ENCODE measurements at regions of chr1 and their contacts with region 1.

Region 1: GRCh38 chr1:17653728-17654351 is 101.3 kb upstream of the ACTL8 start:
- DNase-seq: peak in 1 of 2 donors; percentile 83
- ATAC-seq: no peak
- H3K4me3 ChIP-seq: no peak overlapping the region
- H3K27ac ChIP-seq: peak overlapping the region; percentile 6 to 49
- H3K4me1 ChIP-seq: no peaks in the 10 kb centered on the region
- H3K27me3 ChIP-seq: no peaks in the 10 kb centered on the region

Region 2: GRCh38 chr1:18100491-18101063 is 446.7 kb after region 1 on chr1:
- intact Hi-C with region 1: loop called in 1 of 2 experiments (anchors 10 kb)
- DNase-seq: peak in 1 of 2 donors; percentile 78
- ATAC-seq: peak; percentile 82
- H3K4me3 ChIP-seq: no peak overlapping the region
- H3K27ac ChIP-seq: no peak overlapping the region
- H3K4me1 ChIP-seq: no peaks in the 10 kb centered on the region
- H3K27me3 ChIP-seq: no peaks in the 10 kb centered on the region

Measured in aorta (tissue), 5 donors.